ENCODE measurements at regions of chr10 and their contacts with region 1.

Region 1: GRCh38 chr10:6050801-6051445 is 11.2 kb downstream of the IL2RA start:
- DNase-seq: peak; percentile 66 to 97 (median 90)
- ATAC-seq: peak; percentile 71 to 92 (median 78)
- H3K4me3 ChIP-seq: peak overlapping the region; percentile 59 to 65
- H3K4me3 Mint-ChIP-seq: peak overlapping the region; percentile 86 to 92 (median 90)
- H3K27ac ChIP-seq: peak overlapping the region; percentile 93
- H3K27ac Mint-ChIP-seq: peak overlapping the region; percentile 99
- H3K4me1 ChIP-seq: peaks cover 24 to 81% of the 10 kb centered on the region in 2 experiments
- H3K4me1 Mint-ChIP-seq: peaks cover 81 to 85% (median 82%) of the 10 kb centered on the region in 3 donors
- H3K27me3 ChIP-seq: no peaks in the 10 kb centered on the region
- H3K27me3 Mint-ChIP-seq: no peaks in the 10 kb centered on the region

Region 2: DNA sequence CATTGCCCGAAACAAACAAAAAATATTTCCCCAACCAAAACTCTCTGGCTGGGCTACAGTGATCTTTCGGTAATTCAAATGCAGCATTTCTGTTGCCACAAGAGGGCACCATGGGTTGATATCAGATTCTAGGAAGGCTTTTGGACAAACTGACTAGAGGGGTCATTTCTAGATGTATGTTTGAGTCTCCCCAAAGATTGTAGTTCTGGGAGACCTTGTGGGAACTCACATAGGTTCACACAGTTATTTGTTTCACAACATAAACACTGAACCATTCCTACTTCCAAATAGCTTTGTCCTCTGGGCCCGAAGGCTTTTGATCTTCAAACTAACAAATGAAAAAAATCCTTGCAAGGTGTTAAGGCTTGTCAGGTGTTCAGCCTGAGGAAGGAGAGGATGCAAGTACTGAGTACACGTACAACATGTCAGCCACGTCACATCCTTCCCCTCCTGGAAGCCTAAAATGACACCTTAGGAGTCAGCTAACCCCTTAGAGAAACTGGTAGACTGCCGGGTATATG is 36.6 kb before region 1 on chr10:
- CTCF ChIA-PET with region 1: interaction called, 9 to 45 read pairs
- POLR2A ChIA-PET with region 1: no interaction called
- DNase-seq: peak; percentile 32 to 84 (median 66)
- ATAC-seq: peak; percentile 94 to 99 (median 96)
- H3K4me3 ChIP-seq: no peak overlapping the region
- H3K4me3 Mint-ChIP-seq: peak overlapping the region in 1 of 3 donors; percentile 34
- H3K27ac ChIP-seq: peak overlapping the region; percentile 87
- H3K27ac Mint-ChIP-seq: peak overlapping the region; percentile 89 to 93
- H3K4me1 ChIP-seq: peaks cover 6 to 16% of the 10 kb centered on the region in 2 experiments
- H3K4me1 Mint-ChIP-seq: peaks cover 14 to 29% (median 17%) of the 10 kb centered on the region in 3 donors
- H3K27me3 ChIP-seq: no peaks in the 10 kb centered on the region
- H3K27me3 Mint-ChIP-seq: peaks cover 0 to under 1% of the 10 kb centered on the region in 2 donors

Region 3: GRCh38 chr10:6036861-6037321 is 14.0 kb before region 1 on chr10:
- CTCF ChIA-PET with region 1: interaction called, 7 to 36 read pairs
- POLR2A ChIA-PET with region 1: interaction called, 3 to 11 read pairs
- DNase-seq: peak in 20 of 35 experiments; percentile 13 to 56 (median 29)
- ATAC-seq: peak; percentile 32 to 76 (median 46)
- H3K4me3 ChIP-seq: no peak overlapping the region
- H3K4me3 Mint-ChIP-seq: peak overlapping the region in 2 of 3 donors; percentile 24 to 55
- H3K27ac ChIP-seq: peak overlapping the region; percentile 74
- H3K27ac Mint-ChIP-seq: peak overlapping the region; percentile 95 to 96
- H3K4me1 ChIP-seq: peaks cover 18 to 41% of the 10 kb centered on the region in 2 experiments
- H3K4me1 Mint-ChIP-seq: peaks cover 51 to 75% (median 53%) of the 10 kb centered on the region in 3 donors
- H3K27me3 ChIP-seq: no peaks in the 10 kb centered on the region
- H3K27me3 Mint-ChIP-seq: no peaks in the 10 kb centered on the region

Region 4: GRCh38 chr10:6062101-6062771 is 11.3 kb after region 1 on chr10 and contains the start of gene IL2RA:
- CTCF ChIA-PET with region 1: interaction called in 1 of 2 experiments, 12 read pairs
- POLR2A ChIA-PET with region 1: interaction called, 4 to 13 read pairs
- DNase-seq: peak in 31 of 35 experiments; percentile 21 to 84 (median 41)
- ATAC-seq: peak; percentile 76 to 89 (median 79)
- H3K4me3 ChIP-seq: peak within 1 kb of the TSS; percentile 44 to 67
- H3K4me3 Mint-ChIP-seq: peak within 1 kb of the TSS; percentile 83 to 92 (median 85)
- H3K27ac ChIP-seq: peak within 1 kb of the TSS; percentile 61
- H3K27ac Mint-ChIP-seq: peak within 1 kb of the TSS; percentile 81 to 93
- H3K4me1 ChIP-seq: peaks cover 11 to 40% of the 10 kb centered on the region in 2 experiments
- H3K4me1 Mint-ChIP-seq: peaks cover 64 to 85% (median 65%) of the 10 kb centered on the region in 3 donors
- H3K27me3 ChIP-seq: peaks cover 0 to 3% of the 10 kb centered on the region in 2 experiments
- H3K27me3 Mint-ChIP-seq: no peaks in the 10 kb centered on the region
- total RNA-seq, gene IL2RA: 19.9 to 40.4 (median 28.1) TPM

Region 5: GRCh38 chr10:6068422-6068821 is 17.5 kb after region 1 on chr10:
- CTCF ChIA-PET with region 1: interaction called, 3 to 6 read pairs
- POLR2A ChIA-PET with region 1: interaction called, 4 to 13 read pairs
- DNase-seq: peak in 24 of 35 experiments; percentile 27 to 71 (median 44)
- ATAC-seq: peak; percentile 73 to 87 (median 76)
- H3K4me3 ChIP-seq: peak overlapping the region; percentile 16 to 44
- H3K4me3 Mint-ChIP-seq: peak overlapping the region; percentile 43 to 80 (median 73)
- H3K27ac ChIP-seq: peak overlapping the region; percentile 46
- H3K27ac Mint-ChIP-seq: peak overlapping the region; percentile 81 to 95
- H3K4me1 ChIP-seq: peaks cover 41 to 57% of the 10 kb centered on the region in 2 experiments
- H3K4me1 Mint-ChIP-seq: peaks cover 72 to 91% (median 85%) of the 10 kb centered on the region in 3 donors
- H3K27me3 ChIP-seq: no peaks in the 10 kb centered on the region
- H3K27me3 Mint-ChIP-seq: peaks cover 0 to 2% of the 10 kb centered on the region in 2 donors

Region 6: GRCh38 chr10:6088721-6089390 is 37.9 kb after region 1 on chr10 and contains the start of gene RBM17:
- CTCF ChIA-PET with region 1: interaction called in 1 of 2 experiments, 35 read pairs
- POLR2A ChIA-PET with region 1: interaction called, 3 to 11 read pairs
- DNase-seq: peak; percentile 91 to 100 (median 96)
- ATAC-seq: peak; percentile 84 to 92 (median 85)
- H3K4me3 ChIP-seq: peak within 1 kb of the TSS; percentile 68 to 83
- H3K4me3 Mint-ChIP-seq: peak within 1 kb of the TSS; percentile 87 to 92 (median 91)
- H3K27ac ChIP-seq: no peak within 1 kb of the TSS
- H3K27ac Mint-ChIP-seq: peak within 1 kb of the TSS; percentile 77 to 85
- H3K4me1 ChIP-seq: peaks cover 28 to 46% of the 10 kb centered on the region in 2 experiments
- H3K4me1 Mint-ChIP-seq: peaks cover 65 to 73% (median 72%) of the 10 kb centered on the region in 3 donors
- H3K27me3 ChIP-seq: peaks cover 0 to 4% of the 10 kb centered on the region in 2 experiments
- H3K27me3 Mint-ChIP-seq: no peaks in the 10 kb centered on the region
- total RNA-seq, gene RBM17: 119 to 148 (median 127) TPM